GM10248 (cell line): ENCODE measurements at regions of chr19 and their contacts with region 1.

Region 1: DNA sequence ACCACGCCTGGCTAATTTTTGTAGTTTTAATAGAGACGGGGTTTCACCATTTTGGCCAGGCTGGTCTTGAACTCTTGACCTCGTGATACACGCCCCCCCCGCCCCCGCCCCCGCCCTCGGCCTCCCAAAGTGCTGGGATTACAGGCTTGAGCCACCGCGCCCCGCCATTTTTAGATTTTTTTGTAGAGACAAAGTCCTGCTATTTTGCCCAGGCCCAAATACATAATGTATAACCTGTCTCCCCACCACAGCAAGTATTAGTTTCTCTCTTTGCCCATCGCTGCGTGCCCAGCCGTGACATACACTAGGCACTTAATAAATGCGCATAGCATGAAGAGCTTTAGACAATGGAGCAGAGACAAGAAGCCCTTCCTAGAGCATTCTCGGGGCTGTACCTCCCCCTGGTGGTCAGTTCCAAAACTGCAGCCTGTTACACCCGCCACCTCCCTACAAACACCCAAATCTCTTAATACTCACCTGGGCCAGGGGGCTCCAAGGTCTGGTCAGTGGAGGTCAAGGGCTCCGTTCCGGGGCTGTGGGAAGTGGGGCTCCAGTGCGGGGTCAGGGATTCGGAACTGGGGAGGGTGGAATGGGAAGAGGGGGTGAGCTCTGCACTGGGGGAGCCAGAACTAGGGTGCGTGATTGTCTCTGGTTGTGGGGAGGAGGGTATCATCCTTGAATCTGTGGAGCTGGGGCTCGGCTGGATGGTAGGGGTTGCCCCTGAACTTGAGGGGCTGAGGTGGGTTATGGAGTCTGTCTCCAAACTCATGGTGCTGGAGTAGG is 22.5 kb downstream of the IQCN start:
- DNase-seq: peak; percentile 89
- CTCF ChIP-seq: peak; percentile 92

Region 2: DNA sequence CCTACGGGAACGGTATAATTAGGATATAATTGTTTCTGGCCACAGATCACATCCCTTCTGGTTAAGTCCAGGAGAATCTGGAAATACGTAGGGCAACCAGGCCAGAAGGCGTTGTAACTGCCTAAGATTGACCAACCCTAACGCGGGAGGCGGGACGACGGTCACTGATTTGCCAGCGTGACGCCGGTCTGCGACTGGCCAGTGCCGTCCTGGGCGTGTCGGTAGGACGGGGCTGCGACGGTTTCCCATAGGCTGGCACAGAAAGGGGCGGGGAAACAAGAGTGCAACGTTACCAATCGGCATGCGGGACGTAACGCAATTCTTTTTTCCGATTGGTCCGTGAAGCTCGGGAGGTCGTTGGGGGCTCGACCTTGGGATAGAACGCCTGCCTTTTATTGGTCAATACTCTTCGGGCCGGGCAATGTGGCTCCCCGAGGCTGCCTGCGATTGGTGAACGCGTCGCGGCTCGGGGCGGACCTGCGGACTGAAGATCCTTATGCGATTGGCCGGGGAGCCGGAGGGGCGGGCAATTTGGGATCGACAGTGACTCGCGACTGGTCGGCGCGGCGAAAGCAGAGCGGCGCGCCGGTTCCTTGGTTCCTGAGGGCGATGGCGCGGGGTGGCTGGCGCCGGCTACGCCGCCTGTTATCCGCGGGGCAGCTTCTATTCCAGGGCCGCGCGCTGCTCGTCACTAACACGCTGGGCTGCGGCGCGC is 58.9 kb before region 1 on chr19 and contains the start of gene MPV17L2:
- CTCF ChIA-PET with region 1: interaction called, 36 read pairs
- POLR2A ChIA-PET with region 1: no interaction called
- DNase-seq: peak; percentile 95
- CTCF ChIP-seq: no peak

Region 3: GRCh38 chr19:18203863-18204393 is 47.9 kb before region 1 on chr19 and contains the start of gene RAB3A:
- CTCF ChIA-PET with region 1: interaction called, 228 read pairs
- POLR2A ChIA-PET with region 1: no interaction called
- DNase-seq: peak; percentile 99
- CTCF ChIP-seq: no peak

Region 4: DNA sequence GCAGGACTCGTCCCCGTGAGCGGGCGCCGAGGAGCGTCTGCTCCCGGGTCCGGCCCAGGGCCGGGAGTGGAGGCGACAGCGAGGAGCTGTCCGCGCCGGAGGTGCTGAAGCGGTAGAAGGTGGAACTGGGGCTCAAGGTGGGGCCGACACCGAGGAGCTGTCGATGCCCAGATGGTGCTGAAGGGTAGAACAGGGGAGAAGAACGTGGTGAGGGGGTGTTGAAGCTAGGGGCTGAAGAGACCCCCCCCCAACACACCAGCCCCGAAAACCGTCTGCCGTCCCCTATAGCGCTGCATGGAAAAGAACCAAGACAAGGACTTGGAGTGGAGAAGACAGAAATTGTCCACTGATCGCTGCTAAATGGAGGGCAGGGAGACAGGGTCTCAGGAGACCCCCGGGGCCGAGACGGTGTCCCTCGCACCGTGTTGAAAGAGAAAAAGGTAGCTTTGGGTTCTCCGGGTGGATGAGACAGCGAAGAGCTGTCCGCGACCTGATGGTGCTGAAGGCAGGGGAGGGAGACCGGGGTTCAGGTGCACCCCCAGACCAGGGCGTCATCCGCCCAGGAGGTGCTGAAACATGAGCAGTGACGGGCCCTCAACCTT is 18.5 kb before region 1 on chr19:
- CTCF ChIA-PET with region 1: interaction called, 59 read pairs
- POLR2A ChIA-PET with region 1: no interaction called
- DNase-seq: peak; percentile 78
- CTCF ChIP-seq: no peak

Region 5: GRCh38 chr19:18266771-18267686 is 15.3 kb after region 1 on chr19:
- CTCF ChIA-PET with region 1: interaction called, 42 read pairs
- POLR2A ChIA-PET with region 1: no interaction called
- DNase-seq: no peak
- CTCF ChIP-seq: no peak